SK-N-SH (cell line): ENCODE measurements at regions of chr7 and their contacts with region 1.

Region 1: DNA sequence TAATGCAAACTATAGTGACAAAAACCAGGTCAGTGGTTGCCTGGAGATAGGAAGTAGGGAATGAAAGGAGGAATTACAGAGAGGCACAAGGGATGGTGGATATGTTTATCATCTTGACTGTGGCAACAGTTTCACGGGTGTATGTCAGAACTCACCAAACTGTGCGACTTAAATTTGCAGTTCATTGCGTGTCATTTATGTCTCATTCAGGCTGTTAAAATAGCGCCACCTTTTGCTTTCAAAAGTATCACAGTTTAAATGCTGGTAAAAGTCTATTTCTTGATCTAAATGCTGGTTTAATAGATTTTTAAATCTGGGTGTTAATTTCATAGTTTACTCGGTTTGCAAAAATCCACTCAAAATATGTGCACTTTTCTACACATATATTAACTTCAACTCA is 51.0 kb downstream of the PTTG1IP2 start:
- DNase-seq: no peak
- H3K4me3 ChIP-seq: no peak overlapping the region; a peak in 1 of 4 replicates
- H3K27ac ChIP-seq: no peak overlapping the region
- H3K4me1 ChIP-seq: no peaks in the 10 kb centered on the region; a peak in 1 of 4 replicates
- H3K27me3 ChIP-seq: no peaks in the 10 kb centered on the region
- CTCF ChIP-seq: peak; percentile 62
- EP300 ChIP-seq: no peak
- RAD21 ChIP-seq: peak; percentile 40

Region 2: DNA sequence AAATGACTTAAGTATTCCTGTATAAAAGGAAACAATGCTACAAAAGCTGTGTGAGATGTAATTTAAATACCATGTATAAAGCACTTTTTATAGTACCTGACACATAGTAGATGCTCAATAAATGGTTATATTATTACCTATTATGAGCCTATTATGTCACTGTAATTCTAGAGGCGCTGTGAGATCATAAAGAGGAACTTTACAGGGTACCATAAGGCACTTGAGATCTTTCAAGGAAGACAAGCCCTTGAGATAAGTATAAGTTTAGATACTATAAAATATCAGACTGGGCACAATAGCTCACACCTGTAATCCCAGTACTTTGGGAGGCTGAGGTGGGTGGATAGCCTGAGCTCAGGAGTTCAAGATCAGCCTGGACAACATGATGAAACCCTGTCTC is 12.8 kb before region 1 on chr7:
- CTCF ChIA-PET with region 1: interaction called, 16 read pairs
- POLR2A ChIA-PET with region 1: no interaction called
- DNase-seq: no peak
- H3K4me3 ChIP-seq: no peak overlapping the region
- H3K27ac ChIP-seq: no peak overlapping the region
- H3K4me1 ChIP-seq: no peaks in the 10 kb centered on the region
- H3K27me3 ChIP-seq: no peaks in the 10 kb centered on the region
- CTCF ChIP-seq: no peak
- EP300 ChIP-seq: no peak
- RAD21 ChIP-seq: no peak

Region 3: DNA sequence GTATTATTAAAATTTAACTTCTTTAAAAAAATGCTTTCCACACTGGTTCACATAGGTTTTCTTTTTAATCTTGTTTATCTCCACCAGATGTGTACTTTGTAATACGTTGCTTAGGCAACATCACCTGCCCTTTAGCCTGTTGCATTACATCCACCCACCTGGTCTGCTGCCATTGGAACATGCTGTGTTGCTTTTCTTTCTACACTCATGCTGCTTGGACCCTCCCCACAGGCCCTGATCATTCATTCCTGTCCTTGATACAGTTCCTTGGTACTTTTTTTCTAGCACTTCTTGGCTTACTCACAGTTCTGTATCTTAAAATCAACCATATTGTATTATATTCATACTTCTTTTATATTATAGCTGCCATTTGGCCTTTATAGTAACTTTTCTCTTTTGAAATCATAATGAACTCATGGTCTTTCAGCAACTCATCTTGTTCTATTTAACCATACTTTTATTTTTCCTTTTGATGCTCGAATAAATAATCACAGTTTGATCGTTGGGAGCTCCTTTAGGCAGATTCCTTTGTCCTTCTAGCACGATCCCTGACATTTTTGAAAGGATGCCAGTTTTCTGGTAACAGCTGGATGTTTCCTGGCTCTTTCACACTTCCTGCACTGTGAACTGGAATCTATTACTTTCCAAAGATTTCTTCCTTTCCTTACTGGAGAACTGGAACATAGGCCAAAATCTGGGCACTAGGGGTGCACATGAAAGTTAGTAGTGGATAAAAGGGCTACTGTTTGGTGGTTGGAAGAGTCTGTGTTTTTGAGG is 200.7 kb after region 1 on chr7:
- CTCF ChIA-PET with region 1: no interaction called
- POLR2A ChIA-PET with region 1: no interaction called
- DNase-seq: no peak
- H3K4me3 ChIP-seq: no peak overlapping the region
- H3K27ac ChIP-seq: no peak overlapping the region; a peak in 1 of 4 replicates
- H3K4me1 ChIP-seq: peaks cover 5 to 27% of the 10 kb centered on the region in 2 experiments; a peak in 3 of 4 replicates
- H3K27me3 ChIP-seq: no peaks in the 10 kb centered on the region
- CTCF ChIP-seq: no peak
- EP300 ChIP-seq: no peak
- RAD21 ChIP-seq: no peak